ENCODE measurements at regions of chr14 and their contacts with region 1.

Region 1: DNA sequence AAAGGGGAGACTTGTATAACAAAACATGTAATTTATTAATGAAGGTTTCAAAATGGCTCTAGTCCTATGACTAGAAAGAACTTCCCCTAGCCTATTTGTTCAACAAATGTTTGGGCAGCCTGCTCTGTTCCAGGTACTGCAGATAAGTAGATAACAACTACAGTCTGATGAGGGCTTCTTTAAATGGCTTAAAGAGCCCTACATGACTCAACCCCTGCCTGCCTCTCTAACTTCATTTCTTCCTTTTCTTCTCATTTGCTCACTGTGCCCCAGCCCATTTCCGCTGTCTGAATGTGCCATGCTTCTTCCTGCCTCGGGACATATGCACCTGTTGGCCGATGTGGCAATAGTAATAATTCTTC is 21.4 kb downstream of the ALDH6A1 start:
- DNase-seq: no peak
- H3K27ac ChIP-seq: no peak overlapping the region
- CTCF ChIP-seq: no peak

Region 2: DNA sequence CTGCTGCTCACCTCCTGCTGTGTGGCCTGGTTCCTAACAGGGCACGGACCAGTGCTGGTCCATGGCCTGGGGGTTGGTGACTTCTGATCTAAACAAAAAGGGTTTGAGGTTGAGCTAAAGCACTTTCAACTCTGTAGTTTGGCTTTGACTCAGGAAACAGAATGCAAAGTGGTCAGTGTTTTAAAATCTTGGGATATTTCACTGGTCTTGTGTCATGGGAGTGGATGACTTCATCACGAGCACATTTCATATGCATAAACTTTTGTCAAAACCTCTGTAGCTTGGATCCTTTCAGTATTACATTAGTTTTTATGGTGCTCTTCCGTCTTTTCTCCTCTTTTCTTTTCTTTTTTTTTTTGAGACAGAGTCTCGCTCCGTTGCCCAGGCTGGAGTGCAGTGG is 138.5 kb before region 1 on chr14:
- CTCF ChIA-PET with region 1: no interaction called
- POLR2A ChIA-PET with region 1: interaction called, 14 read pairs
- DNase-seq: no peak
- H3K27ac ChIP-seq: no peak overlapping the region
- CTCF ChIP-seq: no peak

Region 3: DNA sequence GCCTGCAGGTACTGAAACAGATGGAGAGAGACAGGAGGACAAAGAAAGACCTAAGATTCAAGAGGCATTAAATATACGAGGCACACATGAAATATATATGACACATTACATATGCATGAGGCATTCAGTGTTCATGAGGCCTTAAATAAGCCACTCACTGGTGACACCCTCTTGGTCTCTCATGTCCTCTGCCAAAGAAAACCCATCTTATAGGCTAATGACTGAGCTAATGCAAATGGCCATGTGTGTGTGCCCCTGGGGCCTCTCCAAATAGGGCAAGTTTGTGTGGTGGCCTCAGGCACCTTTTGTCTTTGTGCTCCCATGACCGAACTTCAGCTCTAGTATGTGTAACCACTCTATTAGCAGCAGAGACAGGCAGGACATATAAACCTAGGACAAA is 93.9 kb before region 1 on chr14:
- CTCF ChIA-PET with region 1: no interaction called
- POLR2A ChIA-PET with region 1: no interaction called
- DNase-seq: no peak
- H3K27ac ChIP-seq: no peak overlapping the region
- CTCF ChIP-seq: no peak

Region 4: GRCh38 chr14:74045522-74045921 is 17.3 kb before region 1 on chr14:
- CTCF ChIA-PET with region 1: no interaction called
- POLR2A ChIA-PET with region 1: no interaction called
- DNase-seq: no peak
- H3K27ac ChIP-seq: no peak overlapping the region
- CTCF ChIP-seq: no peak